B cell (primary cell): ENCODE measurements at regions of chr3 and their contacts with region 1.

Region 1: DNA sequence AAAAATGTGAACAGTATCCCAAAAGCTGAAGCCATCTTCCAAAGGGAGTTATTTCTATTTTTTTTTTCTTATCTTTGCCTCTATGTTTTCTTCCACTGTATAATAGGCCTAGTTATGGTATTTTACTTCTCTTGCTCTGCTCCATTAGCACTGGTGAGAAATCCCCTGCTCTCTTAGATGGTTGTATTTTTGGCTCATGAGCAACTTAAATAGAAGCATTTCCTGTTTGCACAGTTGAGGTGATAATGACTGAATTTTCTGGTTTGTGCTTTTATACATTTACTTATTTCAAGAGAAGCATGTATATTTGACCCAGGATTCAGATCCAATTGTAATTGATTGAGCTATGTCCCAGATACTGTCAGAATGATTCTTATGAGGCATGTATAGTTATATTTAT is 61.6 kb upstream of the CD200R1L start:
- DNase-seq: peak; percentile 64
- ATAC-seq: peak; percentile 89
- H3K4me3 ChIP-seq: peak overlapping the region in 3 of 5 experiments; percentile 7 to 57 (median 18)
- H3K4me3 Mint-ChIP-seq: peak overlapping the region; percentile 66
- H3K27ac ChIP-seq: peak overlapping the region; percentile 74 to 94
- H3K27ac Mint-ChIP-seq: peak overlapping the region; percentile 71
- H3K4me1 ChIP-seq: peaks cover 48 to 58% of the 10 kb centered on the region in 2 donors
- H3K4me1 Mint-ChIP-seq: peaks cover 62% of the 10 kb centered on the region
- H3K27me3 ChIP-seq: no peaks in the 10 kb centered on the region
- H3K27me3 Mint-ChIP-seq: no peaks in the 10 kb centered on the region
- CTCF ChIP-seq: no peak

Region 2: DNA sequence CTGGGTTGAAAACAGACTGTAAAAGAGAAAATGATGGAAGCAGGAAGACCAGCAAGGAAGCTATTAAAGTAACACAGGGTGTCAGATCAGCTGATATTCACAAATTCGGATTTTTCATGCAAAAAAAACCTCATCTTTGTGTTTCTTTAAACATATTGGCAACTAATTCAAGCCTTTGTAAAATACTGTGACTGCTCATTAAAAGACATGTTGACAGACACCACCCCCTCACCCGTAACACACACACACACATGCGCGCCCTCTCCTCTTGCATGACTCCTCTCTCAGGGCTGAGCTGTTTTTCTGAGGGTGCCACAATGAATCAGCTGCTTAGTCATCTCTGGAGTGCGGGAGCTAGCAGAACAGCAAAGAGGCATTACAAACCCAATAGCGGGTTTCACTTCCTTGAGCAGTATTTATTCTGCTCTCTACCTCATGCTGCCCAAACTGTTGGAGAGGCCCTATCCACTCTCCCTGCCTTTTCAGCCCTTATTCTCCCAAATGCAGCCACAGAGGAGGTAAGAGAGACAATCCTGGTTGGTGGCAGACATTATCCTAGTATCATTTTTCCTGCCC is 231.5 kb before region 1 on chr3:
- CTCF ChIA-PET with region 1: no interaction called
- POLR2A ChIA-PET with region 1: no interaction called
- intact Hi-C with region 1: loop called (anchors 5 kb)
- DNase-seq: peak; percentile 75
- ATAC-seq: peak; percentile 98
- H3K4me3 ChIP-seq: no peak overlapping the region
- H3K4me3 Mint-ChIP-seq: peak overlapping the region; percentile 17
- H3K27ac ChIP-seq: no peak overlapping the region
- H3K27ac Mint-ChIP-seq: peak overlapping the region; percentile 39
- H3K4me1 ChIP-seq: peaks cover 14 to 15% of the 10 kb centered on the region in 2 donors
- H3K4me1 Mint-ChIP-seq: peaks cover 27% of the 10 kb centered on the region
- H3K27me3 ChIP-seq: peaks cover 0 to 3% (median 0%) of the 10 kb centered on the region in 4 experiments
- H3K27me3 Mint-ChIP-seq: peaks cover 12% of the 10 kb centered on the region
- CTCF ChIP-seq: no peak

Region 3: DNA sequence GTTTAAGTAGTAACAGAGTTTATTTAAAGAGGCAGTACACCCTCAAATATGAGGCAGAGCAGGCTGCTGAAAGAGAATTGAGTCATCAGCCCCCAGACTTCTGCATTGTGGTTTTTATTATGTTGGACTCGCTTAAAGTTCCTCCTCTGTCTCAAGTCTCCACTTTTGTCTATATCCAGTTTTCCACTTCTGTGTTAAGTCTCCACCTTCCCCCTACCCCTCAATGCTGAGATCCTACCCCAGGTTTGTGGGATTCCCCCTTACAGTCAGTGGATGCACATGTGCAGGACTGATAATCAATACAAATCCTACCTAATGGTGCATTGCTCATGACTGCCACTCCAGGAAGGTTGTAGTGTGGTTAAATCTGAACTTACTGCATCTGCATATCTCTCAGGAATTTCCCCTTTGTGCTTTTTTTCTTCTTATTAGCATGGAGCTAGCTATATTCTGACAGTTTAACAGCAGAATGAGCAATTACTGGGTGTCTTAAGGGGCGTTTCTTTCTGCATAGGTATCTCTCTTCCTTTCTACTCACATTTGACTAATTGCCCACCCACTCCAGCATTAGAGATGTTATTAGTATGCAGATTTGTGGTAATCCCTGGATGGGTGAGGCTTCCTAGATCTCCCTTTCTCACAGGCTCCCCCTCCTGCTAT is 49.7 kb before region 1 on chr3:
- CTCF ChIA-PET with region 1: no interaction called
- POLR2A ChIA-PET with region 1: no interaction called
- intact Hi-C with region 1: loop called (anchors 10 kb)
- DNase-seq: peak; percentile 50
- ATAC-seq: peak; percentile 65
- H3K4me3 ChIP-seq: no peak overlapping the region
- H3K4me3 Mint-ChIP-seq: peak overlapping the region; percentile 66
- H3K27ac ChIP-seq: no peak overlapping the region
- H3K27ac Mint-ChIP-seq: peak overlapping the region; percentile 69
- H3K4me1 ChIP-seq: peaks cover 25 to 32% of the 10 kb centered on the region in 2 donors
- H3K4me1 Mint-ChIP-seq: peaks cover 37% of the 10 kb centered on the region
- H3K27me3 ChIP-seq: no peaks in the 10 kb centered on the region
- H3K27me3 Mint-ChIP-seq: no peaks in the 10 kb centered on the region
- CTCF ChIP-seq: no peak

Region 4: GRCh38 chr3:112873632-112874031 is 34.6 kb before region 1 on chr3:
- CTCF ChIA-PET with region 1: no interaction called
- POLR2A ChIA-PET with region 1: no interaction called
- intact Hi-C with region 1: loop called (anchors 5 kb)
- DNase-seq: peak; percentile 56
- ATAC-seq: peak; percentile 62
- H3K4me3 ChIP-seq: peak overlapping the region in 1 of 5 experiments; percentile 53
- H3K4me3 Mint-ChIP-seq: peak overlapping the region; percentile 74
- H3K27ac ChIP-seq: no peak overlapping the region
- H3K27ac Mint-ChIP-seq: peak overlapping the region; percentile 85
- H3K4me1 ChIP-seq: peaks cover 18 to 26% of the 10 kb centered on the region in 2 donors
- H3K4me1 Mint-ChIP-seq: peaks cover 36% of the 10 kb centered on the region
- H3K27me3 ChIP-seq: no peaks in the 10 kb centered on the region
- H3K27me3 Mint-ChIP-seq: no peaks in the 10 kb centered on the region
- CTCF ChIP-seq: no peak

Region 5: GRCh38 chr3:112894258-112894657 is 14.0 kb before region 1 on chr3:
- CTCF ChIA-PET with region 1: interaction called, 4 read pairs
- POLR2A ChIA-PET with region 1: no interaction called
- intact Hi-C with region 1: loop called (anchors 2 kb)
- DNase-seq: no peak
- ATAC-seq: no peak
- H3K4me3 ChIP-seq: no peak overlapping the region
- H3K4me3 Mint-ChIP-seq: no peak overlapping the region
- H3K27ac ChIP-seq: no peak overlapping the region
- H3K27ac Mint-ChIP-seq: no peak overlapping the region
- H3K4me1 ChIP-seq: peaks cover 4 to 5% of the 10 kb centered on the region in 2 donors
- H3K4me1 Mint-ChIP-seq: peaks cover 8% of the 10 kb centered on the region
- H3K27me3 ChIP-seq: no peaks in the 10 kb centered on the region
- H3K27me3 Mint-ChIP-seq: no peaks in the 10 kb centered on the region
- CTCF ChIP-seq: no peak

Region 6: GRCh38 chr3:112973325-112974177 is 65.3 kb after region 1 on chr3:
- CTCF ChIA-PET with region 1: no interaction called
- POLR2A ChIA-PET with region 1: no interaction called
- intact Hi-C with region 1: loop called (anchors 2 kb)
- DNase-seq: peak; percentile 60
- ATAC-seq: peak; percentile 85
- H3K4me3 ChIP-seq: peak overlapping the region in 4 of 5 experiments; percentile 32 to 52 (median 42)
- H3K4me3 Mint-ChIP-seq: peak overlapping the region; percentile 82
- H3K27ac ChIP-seq: peak overlapping the region in 1 of 2 donors; percentile 28
- H3K27ac Mint-ChIP-seq: peak overlapping the region; percentile 78
- H3K4me1 ChIP-seq: peaks cover 45 to 54% of the 10 kb centered on the region in 2 donors
- H3K4me1 Mint-ChIP-seq: peaks cover 72% of the 10 kb centered on the region
- H3K27me3 ChIP-seq: no peaks in the 10 kb centered on the region
- H3K27me3 Mint-ChIP-seq: no peaks in the 10 kb centered on the region
- CTCF ChIP-seq: no peak

Region 7: DNA sequence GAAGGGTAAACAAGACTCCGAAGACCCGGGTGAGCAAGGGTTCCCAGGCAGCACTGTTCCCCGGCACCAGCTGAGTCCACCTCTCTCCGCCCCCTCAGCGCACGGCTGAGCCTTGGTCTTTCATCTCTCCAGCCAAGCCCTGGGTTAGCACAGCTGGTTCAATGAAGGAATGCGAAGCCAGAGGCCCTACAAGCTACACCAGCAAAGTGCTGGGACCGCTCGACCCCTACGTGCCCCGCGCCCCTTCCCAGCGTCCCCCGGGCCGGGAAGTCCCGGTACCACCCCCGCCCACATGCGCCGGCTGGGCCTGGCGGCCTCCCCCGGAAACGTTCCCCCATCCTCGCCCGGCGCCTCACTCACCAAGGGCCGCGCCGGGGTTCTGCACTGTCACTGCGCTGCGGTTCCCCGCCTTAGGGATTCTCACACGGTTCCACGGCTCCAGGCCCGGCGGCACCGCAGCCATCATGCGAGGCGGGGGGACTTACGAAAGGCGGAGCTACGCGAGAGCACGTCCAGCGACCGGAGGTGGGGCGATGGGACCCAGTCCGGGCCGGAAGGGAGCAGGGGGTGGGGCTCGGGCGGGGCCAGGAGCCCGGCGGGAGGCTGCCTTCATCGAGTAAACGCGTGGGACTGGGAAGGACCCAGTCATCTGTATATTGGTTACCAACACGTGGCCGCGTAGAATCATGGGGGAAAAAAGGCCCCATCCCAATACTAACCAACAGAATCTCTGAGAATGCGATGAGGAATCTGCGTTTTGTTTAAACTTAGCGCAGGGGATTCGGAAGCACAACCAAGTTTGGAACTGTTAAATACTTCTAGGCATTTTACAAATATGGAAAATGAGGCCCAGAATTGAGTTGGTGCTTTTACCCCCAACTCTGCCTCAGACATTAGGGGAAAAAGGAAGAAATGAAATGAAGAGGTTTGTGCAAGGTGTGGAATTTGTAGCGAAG is 111.2 kb after region 1 on chr3:
- CTCF ChIA-PET with region 1: no interaction called
- POLR2A ChIA-PET with region 1: no interaction called
- intact Hi-C with region 1: no loop called
- DNase-seq: peak; percentile 89
- ATAC-seq: peak; percentile 85
- H3K4me3 ChIP-seq: peak overlapping the region; percentile 75 to 84 (median 84)
- H3K4me3 Mint-ChIP-seq: peak overlapping the region; percentile 94
- H3K27ac ChIP-seq: peak overlapping the region; percentile 90 to 91
- H3K27ac Mint-ChIP-seq: peak overlapping the region; percentile 94
- H3K4me1 ChIP-seq: peaks cover 22 to 25% of the 10 kb centered on the region in 2 donors
- H3K4me1 Mint-ChIP-seq: peaks cover 37% of the 10 kb centered on the region
- H3K27me3 ChIP-seq: no peaks in the 10 kb centered on the region
- H3K27me3 Mint-ChIP-seq: no peaks in the 10 kb centered on the region
- CTCF ChIP-seq: no peak